GM10248 (cell line): ENCODE measurements at regions of chr10 and their contacts with region 1.

Region 1: GRCh38 chr10:30583778-30584415 is 45.7 kb downstream of the LYZL2 start:
- DNase-seq: peak; percentile 53
- CTCF ChIP-seq: no peak

Region 2: GRCh38 chr10:30313579-30314350 is 270.1 kb before region 1 on chr10:
- CTCF ChIA-PET with region 1: no interaction called
- POLR2A ChIA-PET with region 1: no interaction called
- DNase-seq: no peak
- CTCF ChIP-seq: no peak

Region 3: DNA sequence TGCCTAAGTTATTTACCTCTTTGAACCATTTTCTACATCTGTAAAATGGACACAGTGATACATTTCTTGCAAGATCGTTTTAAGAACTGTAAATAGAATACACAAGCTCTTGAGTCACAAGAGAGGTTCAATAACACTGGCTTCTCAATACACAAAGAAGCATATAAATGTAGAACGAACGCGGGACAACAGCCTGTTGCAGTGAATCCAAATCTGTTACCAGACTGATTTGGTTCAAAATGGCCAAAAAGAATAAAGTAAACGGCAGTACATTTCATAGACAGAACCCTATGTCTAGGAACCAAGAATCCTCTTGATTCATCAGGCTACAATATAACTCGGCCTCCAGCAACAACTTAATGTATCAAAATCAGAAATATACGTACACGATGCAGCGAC is 235.5 kb before region 1 on chr10:
- CTCF ChIA-PET with region 1: interaction called, 11 read pairs
- POLR2A ChIA-PET with region 1: no interaction called
- DNase-seq: no peak
- CTCF ChIP-seq: no peak

Region 4: DNA sequence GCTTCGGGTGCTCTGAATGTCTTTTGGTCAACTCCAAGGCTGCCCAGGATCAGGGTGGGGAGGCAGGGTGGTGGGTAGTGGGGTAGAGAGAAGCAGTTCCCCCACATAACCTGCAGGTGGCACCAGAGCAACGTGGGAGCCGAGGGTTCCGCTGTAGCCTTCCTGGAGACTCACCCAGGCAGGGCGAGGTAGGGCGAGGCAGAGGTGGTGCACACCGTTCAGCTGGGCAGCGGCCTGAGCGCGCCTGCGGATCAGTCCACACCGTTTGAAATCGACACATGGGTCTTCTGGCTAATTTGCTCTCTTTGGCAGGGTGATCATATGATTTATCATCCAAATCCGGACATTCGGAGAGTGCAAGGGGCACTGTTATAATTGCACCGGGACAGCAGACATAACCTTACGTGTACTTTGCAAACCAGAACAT is 191.3 kb before region 1 on chr10:
- CTCF ChIA-PET with region 1: interaction called, 167 read pairs
- POLR2A ChIA-PET with region 1: no interaction called
- DNase-seq: peak; percentile 88
- CTCF ChIP-seq: peak; percentile 82

Region 5: GRCh38 chr10:30542001-30542894 is 41.6 kb before region 1 on chr10:
- CTCF ChIA-PET with region 1: interaction called, 41 read pairs
- POLR2A ChIA-PET with region 1: no interaction called
- DNase-seq: peak; percentile 42
- CTCF ChIP-seq: no peak

Region 6: DNA sequence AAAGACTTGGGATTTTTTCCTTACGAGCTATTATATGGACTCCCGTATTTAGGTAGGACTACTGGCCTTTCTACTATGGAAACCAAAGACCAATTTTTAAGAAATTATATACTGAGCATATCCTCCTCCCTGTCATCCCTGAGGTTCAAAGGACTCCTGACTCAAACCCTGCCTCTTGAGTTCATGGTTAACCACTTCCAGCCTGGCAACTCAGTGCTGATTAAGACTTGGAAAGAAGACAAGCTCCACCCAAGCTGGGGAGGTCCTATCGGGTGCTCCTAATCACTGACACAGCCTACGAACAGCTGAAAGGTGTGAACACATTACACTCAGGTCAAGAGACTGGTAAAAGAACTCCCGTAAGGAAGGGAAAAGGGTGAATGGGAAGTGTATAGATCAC is 21.1 kb before region 1 on chr10:
- CTCF ChIA-PET with region 1: interaction called, 38 read pairs
- POLR2A ChIA-PET with region 1: no interaction called
- DNase-seq: no peak
- CTCF ChIP-seq: no peak